Esophagus muscularis mucosa (tissue), 4 donors: ENCODE measurements at regions of chr14 and their contacts with region 1.

Region 1: DNA sequence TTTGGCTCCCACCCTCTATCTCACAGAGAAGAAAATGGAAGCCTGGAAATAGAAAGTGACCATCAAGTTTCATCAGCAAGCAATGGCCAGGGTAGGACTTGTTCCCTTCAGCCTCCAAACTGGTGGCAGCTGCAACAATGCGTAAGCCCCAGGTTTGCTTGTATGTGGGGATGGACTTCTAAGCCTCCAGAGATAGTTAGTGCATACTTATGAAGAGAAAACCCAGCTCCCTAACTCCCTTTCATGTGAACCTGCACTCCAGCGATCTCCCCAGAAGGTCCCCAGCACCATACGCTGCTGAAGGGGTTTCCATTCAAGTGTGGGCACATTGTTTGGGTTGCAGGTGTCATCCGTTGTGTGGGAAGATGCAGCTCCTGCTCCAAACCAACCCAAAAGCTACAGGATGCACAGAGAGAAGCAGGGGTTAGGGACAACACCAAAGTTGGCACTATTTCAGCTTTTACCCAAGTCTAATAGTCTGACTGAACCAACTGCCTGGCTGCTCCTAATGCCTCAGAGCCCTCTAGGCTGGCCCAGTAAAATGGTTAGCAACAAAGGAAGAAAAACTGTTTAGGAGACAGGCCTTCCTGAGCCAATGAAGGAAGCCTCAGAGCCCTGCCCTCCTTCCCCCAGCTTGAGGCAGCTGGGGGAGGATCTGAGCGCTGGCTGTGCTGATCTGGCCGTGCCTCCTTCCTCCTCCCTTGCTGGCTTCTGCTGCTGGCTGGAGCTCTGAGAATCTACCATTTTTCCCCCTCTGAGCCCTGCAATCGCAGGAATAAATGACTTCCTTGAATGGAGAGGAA is 12.3 kb downstream of the ZFP36L1 start:
- DNase-seq: no peak
- H3K4me3 ChIP-seq: no peak overlapping the region
- H3K27ac ChIP-seq: peak overlapping the region; percentile 59 to 100 (median 76)
- H3K4me1 ChIP-seq: peaks cover 36 to 61% (median 54%) of the 10 kb centered on the region in 4 donors
- H3K27me3 ChIP-seq: no peaks in the 10 kb centered on the region
- CTCF ChIP-seq: no peak
- EP300 ChIP-seq: no peak
- POLR2A ChIP-seq: no peak

Region 2: GRCh38 chr14:68386950-68387779 is 393.4 kb before region 1 on chr14:
- intact Hi-C with region 1: loop called (anchors 5 kb)
- DNase-seq: no peak
- H3K4me3 ChIP-seq: no peak overlapping the region
- H3K27ac ChIP-seq: peak overlapping the region; percentile 16 to 81 (median 78)
- H3K4me1 ChIP-seq: peaks cover 25 to 74% (median 69%) of the 10 kb centered on the region in 4 donors
- H3K27me3 ChIP-seq: no peaks in the 10 kb centered on the region
- CTCF ChIP-seq: no peak
- EP300 ChIP-seq: no peak
- POLR2A ChIP-seq: no peak